Activated CD8-positive, alpha-beta memory T cell treated with anti-CD3 and anti-CD28 coated beads, Interleukin-2, amount 10 ng/mL, durations not matched to agents 7 days and 5 days (primary cell): ENCODE measurements at regions of chr15 and their contacts with region 1.

Region 1: GRCh38 chr15:85543741-85544155 is 163.3 kb downstream of the AKAP13 start:
- DNase-seq: peak; percentile 81
- ATAC-seq: peak; percentile 76
- H3K4me3 Mint-ChIP-seq: peak overlapping the region; percentile 63
- H3K27ac Mint-ChIP-seq: peak overlapping the region; percentile 86
- H3K4me1 Mint-ChIP-seq: peaks cover 80% of the 10 kb centered on the region
- H3K27me3 Mint-ChIP-seq: no peaks in the 10 kb centered on the region

Region 2: DNA sequence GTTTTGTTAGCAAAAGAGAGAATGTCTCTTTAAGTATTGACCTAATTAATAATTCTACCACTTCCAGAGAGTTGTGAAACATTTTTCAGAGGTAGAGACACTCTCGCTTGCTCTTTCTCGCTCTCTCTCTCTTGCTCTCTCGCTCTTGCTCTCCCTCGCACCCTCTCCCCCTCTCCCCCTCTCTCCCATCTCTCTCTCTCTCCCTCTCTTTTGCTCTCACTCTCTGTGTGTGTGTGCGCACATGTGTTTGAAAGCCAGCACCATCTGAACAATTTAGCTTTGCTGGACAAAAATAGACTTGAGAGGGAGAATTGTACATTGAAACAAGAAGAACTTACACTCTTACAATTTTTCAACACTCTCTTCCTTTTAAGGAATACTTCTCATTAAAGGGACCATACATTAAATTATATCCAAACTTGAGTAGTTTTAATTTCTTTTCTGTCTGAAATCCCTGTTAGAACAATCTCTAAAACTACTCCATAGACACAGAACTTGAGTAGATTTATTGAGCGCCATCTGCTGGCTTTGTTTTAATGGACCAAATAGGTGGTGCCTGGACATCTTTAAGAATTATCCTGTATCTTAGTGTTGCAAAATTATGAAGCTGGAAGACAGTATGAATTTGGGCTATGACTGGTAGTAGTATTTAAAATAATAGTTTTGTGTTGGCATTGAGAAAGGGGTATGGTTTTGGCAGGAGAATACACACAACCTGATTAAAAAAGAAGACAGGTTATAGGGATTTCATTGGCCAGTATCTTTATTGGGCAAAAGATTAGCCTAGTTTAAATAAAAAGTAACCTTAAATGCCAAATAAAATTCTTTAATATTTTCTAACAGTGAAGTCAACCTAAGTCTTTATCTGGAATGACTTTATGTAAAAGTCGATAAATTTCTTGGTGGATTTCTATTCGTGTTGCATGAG is 38.7 kb before region 1 on chr15:
- CTCF ChIA-PET with region 1: interaction called, 11 read pairs
- DNase-seq: peak; percentile 53
- ATAC-seq: no peak
- H3K4me3 Mint-ChIP-seq: no peak overlapping the region
- H3K27ac Mint-ChIP-seq: no peak overlapping the region
- H3K4me1 Mint-ChIP-seq: peaks cover 32% of the 10 kb centered on the region
- H3K27me3 Mint-ChIP-seq: no peaks in the 10 kb centered on the region

Region 3: DNA sequence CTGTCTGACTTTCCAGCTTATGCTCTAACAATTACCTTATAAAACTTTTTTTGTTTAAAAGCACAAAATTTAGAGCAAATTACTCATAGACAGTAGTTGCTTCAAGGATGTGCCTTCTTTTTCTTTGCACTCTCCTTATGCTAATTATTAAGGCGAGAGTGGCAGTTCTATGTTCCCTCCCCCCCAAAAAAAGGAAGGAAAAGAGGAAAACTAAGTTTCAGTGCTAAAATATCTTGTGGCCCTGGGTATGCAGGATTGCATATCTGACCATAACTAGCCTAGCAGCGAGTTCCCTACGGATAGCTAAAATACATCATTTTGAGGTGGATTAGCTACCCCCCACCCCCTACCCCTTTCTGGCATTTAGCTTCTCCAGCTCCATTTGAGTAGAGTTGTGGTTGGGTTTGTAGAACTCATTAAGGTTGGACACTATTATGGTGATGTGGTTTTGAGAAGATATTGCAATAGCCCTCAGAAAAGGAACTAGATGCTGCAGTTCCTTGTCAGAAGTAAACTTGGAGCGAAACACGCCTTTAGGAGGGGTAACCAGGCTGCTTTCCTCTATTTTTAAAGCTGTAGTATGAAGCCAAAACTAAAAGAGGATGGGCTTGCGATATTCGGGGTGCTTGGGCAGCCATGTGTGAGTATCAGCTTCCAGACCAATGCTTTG is 11.2 kb after region 1 on chr15:
- CTCF ChIA-PET with region 1: interaction called, 26 read pairs
- DNase-seq: no peak
- ATAC-seq: peak; percentile 24
- H3K4me3 Mint-ChIP-seq: no peak overlapping the region
- H3K27ac Mint-ChIP-seq: peak overlapping the region; percentile 17
- H3K4me1 Mint-ChIP-seq: peaks cover 54% of the 10 kb centered on the region
- H3K27me3 Mint-ChIP-seq: no peaks in the 10 kb centered on the region